ENCODE measurements at regions of chr1 and their contacts with region 1.

Region 1: DNA sequence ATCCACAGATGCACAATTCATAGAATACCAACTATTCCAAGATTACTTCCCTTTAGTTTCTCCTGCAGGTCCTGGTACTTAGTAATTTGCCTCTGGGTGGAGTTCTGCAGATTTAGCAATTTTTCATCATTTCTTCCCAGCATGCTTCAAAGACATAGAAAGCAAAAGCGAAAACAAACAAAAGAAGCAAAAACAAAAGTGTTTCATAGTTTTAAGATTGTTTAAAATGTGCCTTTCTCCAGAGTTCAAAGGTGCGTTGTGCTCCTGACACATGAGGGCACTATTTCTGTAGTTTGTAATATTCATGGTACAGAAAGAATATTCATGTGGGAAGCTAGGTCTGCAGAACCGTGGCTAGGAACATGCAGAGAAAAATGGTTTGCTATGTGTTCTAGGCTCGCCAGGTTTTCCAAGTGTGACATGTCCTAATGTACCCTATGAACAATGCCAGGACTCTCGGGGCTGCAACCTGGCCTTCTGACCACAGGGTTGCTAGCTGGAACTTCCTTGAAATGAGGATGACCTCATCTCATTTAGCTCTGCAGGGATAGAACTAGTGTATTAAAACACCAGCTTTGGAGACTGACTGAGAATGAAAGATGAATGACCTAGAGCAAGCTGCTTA is 30.0 kb upstream of the RCSD1 start:
- DNase-seq: peak; percentile 56 to 74 (median 65)
- H3K4me3 ChIP-seq: no peak overlapping the region
- H3K4me3 Mint-ChIP-seq: peak overlapping the region in 7 of 8 donors; percentile 23 to 82 (median 57)
- H3K27ac ChIP-seq: no peak overlapping the region
- H3K27ac Mint-ChIP-seq: peak overlapping the region; percentile 25 to 62 (median 40)
- H3K4me1 ChIP-seq: peaks cover 39% of the 10 kb centered on the region
- H3K4me1 Mint-ChIP-seq: peaks cover 31 to 47% (median 41%) of the 10 kb centered on the region in 4 donors
- H3K27me3 ChIP-seq: no peaks in the 10 kb centered on the region
- H3K27me3 Mint-ChIP-seq: no peaks in the 10 kb centered on the region

Region 2: DNA sequence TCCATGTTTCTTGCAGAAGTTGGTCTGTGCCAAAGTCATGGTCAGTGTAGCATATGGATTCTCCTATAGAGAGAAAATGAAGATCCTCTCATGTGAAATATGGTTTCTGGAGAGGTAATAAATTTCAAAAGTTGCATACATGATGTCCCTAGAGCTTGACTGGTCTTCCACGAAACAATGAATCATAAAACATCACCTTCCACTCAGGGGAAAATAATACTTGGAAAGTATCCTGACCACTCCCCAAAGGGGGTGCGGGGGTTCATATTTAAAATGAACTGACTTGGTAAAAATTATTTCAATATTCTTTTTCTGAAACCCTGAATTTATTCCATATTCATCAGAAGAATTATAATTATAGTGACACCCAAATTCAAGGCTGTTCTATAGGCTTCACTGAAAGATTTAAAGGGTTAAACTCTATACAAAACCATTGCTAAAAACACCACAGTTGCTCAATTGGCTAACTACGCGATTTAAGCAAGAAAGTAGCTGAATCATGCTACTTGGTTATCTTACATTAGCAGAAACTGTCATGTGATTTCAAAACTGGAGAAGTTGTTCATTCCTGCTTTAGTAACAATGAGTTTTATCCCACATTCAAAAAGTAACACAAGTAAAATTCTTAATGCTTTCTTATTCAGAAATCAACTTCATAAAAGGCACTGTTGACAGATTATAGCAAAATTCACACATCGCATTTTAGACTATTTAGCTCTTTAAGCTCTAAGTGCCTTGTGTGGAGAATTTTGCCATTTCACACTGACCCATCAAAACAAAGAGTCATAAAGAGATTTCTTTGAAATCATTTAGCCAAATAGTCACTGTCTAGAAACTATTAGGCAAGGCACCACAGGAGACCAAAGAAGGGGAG is 51.8 kb before region 1 on chr1:
- CTCF ChIA-PET with region 1: no interaction called
- POLR2A ChIA-PET with region 1: no interaction called
- intact Hi-C with region 1: no loop called
- DNase-seq: no peak
- H3K4me3 ChIP-seq: no peak overlapping the region
- H3K4me3 Mint-ChIP-seq: no peak overlapping the region
- H3K27ac ChIP-seq: no peak overlapping the region
- H3K27ac Mint-ChIP-seq: no peak overlapping the region
- H3K4me1 ChIP-seq: peaks cover 19% of the 10 kb centered on the region
- H3K4me1 Mint-ChIP-seq: peaks cover 18 to 40% (median 27%) of the 10 kb centered on the region in 4 donors
- H3K27me3 ChIP-seq: no peaks in the 10 kb centered on the region
- H3K27me3 Mint-ChIP-seq: no peaks in the 10 kb centered on the region

Region 3: GRCh38 chr1:167563579-167564246 is 36.4 kb before region 1 on chr1:
- CTCF ChIA-PET with region 1: interaction called, 10 read pairs
- POLR2A ChIA-PET with region 1: no interaction called
- intact Hi-C with region 1: no loop called
- DNase-seq: no peak
- H3K4me3 ChIP-seq: no peak overlapping the region
- H3K4me3 Mint-ChIP-seq: no peak overlapping the region
- H3K27ac ChIP-seq: no peak overlapping the region
- H3K27ac Mint-ChIP-seq: peak overlapping the region in 1 of 7 donors; percentile 42
- H3K4me1 ChIP-seq: no peaks in the 10 kb centered on the region
- H3K4me1 Mint-ChIP-seq: peaks cover 0 to 1% (median 0%) of the 10 kb centered on the region in 4 donors
- H3K27me3 ChIP-seq: no peaks in the 10 kb centered on the region
- H3K27me3 Mint-ChIP-seq: peaks cover 0 to 1% of the 10 kb centered on the region in 2 donors

Region 4: GRCh38 chr1:167582064-167582463 is 18.0 kb before region 1 on chr1:
- CTCF ChIA-PET with region 1: no interaction called
- POLR2A ChIA-PET with region 1: no interaction called
- intact Hi-C with region 1: no loop called
- DNase-seq: no peak
- H3K4me3 ChIP-seq: no peak overlapping the region
- H3K4me3 Mint-ChIP-seq: no peak overlapping the region
- H3K27ac ChIP-seq: no peak overlapping the region
- H3K27ac Mint-ChIP-seq: no peak overlapping the region
- H3K4me1 ChIP-seq: no peaks in the 10 kb centered on the region
- H3K4me1 Mint-ChIP-seq: no peaks in the 10 kb centered on the region
- H3K27me3 ChIP-seq: no peaks in the 10 kb centered on the region
- H3K27me3 Mint-ChIP-seq: peaks cover 0 to 6% of the 10 kb centered on the region in 2 donors

Region 5: DNA sequence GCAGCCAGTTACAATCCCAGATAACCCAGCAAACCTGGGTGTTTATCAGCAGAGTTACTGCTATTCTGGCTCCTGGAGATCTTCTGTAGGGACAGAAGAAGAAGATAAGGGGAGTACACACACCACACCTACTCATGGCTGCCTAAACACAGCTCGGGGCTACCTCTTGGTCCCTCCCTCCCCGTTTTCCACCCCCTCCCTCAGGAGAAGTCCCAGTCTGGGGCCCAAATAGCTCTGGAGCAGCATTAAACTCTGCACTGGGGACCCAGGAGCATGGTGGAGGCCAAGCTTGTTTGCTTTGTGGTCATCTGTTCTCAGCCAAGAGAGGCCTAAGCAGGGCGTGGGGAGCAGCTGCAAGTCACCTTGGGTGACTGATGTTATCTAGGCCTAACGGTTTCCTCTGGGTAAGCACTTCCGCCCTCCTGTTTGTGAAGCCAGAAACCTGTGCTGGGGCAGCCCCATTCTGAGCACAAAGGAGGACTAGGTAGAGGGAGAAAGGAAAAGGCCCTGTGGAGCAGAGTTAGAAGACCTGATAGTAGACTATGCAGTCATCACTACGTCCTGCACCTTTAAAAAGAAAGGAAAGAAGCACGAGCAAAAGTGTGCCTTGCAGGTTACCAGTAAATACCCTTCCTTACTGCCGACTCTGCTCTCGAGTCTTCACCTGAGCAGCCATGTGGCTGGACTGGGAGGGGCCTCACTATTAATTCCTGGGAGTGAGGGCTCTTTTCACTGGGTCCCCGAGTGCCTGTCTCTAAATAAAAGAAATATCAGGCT is 28.0 kb after region 1 on chr1:
- CTCF ChIA-PET with region 1: interaction called, 406 read pairs
- POLR2A ChIA-PET with region 1: interaction called, 255 read pairs
- intact Hi-C with region 1: loop called (anchors 2 kb)
- DNase-seq: peak; percentile 78 to 95 (median 81)
- H3K4me3 ChIP-seq: peak overlapping the region; percentile 74 to 82
- H3K4me3 Mint-ChIP-seq: peak overlapping the region; percentile 90 to 99 (median 94)
- H3K27ac ChIP-seq: peak overlapping the region; percentile 90
- H3K27ac Mint-ChIP-seq: peak overlapping the region; percentile 94 to 99 (median 96)
- H3K4me1 ChIP-seq: peaks cover 56% of the 10 kb centered on the region
- H3K4me1 Mint-ChIP-seq: peaks cover 46 to 81% (median 54%) of the 10 kb centered on the region in 4 donors
- H3K27me3 ChIP-seq: no peaks in the 10 kb centered on the region
- H3K27me3 Mint-ChIP-seq: no peaks in the 10 kb centered on the region

Region 6: GRCh38 chr1:167650269-167651160 is 50.4 kb after region 1 on chr1:
- CTCF ChIA-PET with region 1: interaction called, 26 read pairs
- POLR2A ChIA-PET with region 1: interaction called, 3 read pairs
- intact Hi-C with region 1: no loop called
- DNase-seq: no peak
- H3K4me3 ChIP-seq: peak overlapping the region in 1 of 2 donors; percentile 12
- H3K4me3 Mint-ChIP-seq: peak overlapping the region in 7 of 8 donors; percentile 63 to 87 (median 75)
- H3K27ac ChIP-seq: peak overlapping the region; percentile 55
- H3K27ac Mint-ChIP-seq: peak overlapping the region; percentile 87 to 95 (median 92)
- H3K4me1 ChIP-seq: peaks cover 98% of the 10 kb centered on the region
- H3K4me1 Mint-ChIP-seq: peaks cover 71 to 92% (median 84%) of the 10 kb centered on the region in 4 donors
- H3K27me3 ChIP-seq: no peaks in the 10 kb centered on the region
- H3K27me3 Mint-ChIP-seq: no peaks in the 10 kb centered on the region

Region 7: GRCh38 chr1:167676205-167676915 is 76.3 kb after region 1 on chr1:
- CTCF ChIA-PET with region 1: interaction called, 37 read pairs
- POLR2A ChIA-PET with region 1: interaction called, 10 read pairs
- intact Hi-C with region 1: no loop called
- DNase-seq: no peak
- H3K4me3 ChIP-seq: no peak overlapping the region
- H3K4me3 Mint-ChIP-seq: no peak overlapping the region
- H3K27ac ChIP-seq: peak overlapping the region; percentile 17
- H3K27ac Mint-ChIP-seq: peak overlapping the region in 6 of 7 donors; percentile 70 to 85 (median 78)
- H3K4me1 ChIP-seq: peaks cover 71% of the 10 kb centered on the region
- H3K4me1 Mint-ChIP-seq: peaks cover 27 to 50% (median 41%) of the 10 kb centered on the region in 4 donors
- H3K27me3 ChIP-seq: no peaks in the 10 kb centered on the region
- H3K27me3 Mint-ChIP-seq: no peaks in the 10 kb centered on the region

Region 8: GRCh38 chr1:167715157-167715999 is 115.3 kb after region 1 on chr1:
- CTCF ChIA-PET with region 1: interaction called, 35 read pairs
- POLR2A ChIA-PET with region 1: interaction called, 11 read pairs
- intact Hi-C with region 1: no loop called
- DNase-seq: peak; percentile 87 to 91 (median 88)
- H3K4me3 ChIP-seq: peak overlapping the region; percentile 80 to 87
- H3K4me3 Mint-ChIP-seq: peak overlapping the region; percentile 84 to 98 (median 92)
- H3K27ac ChIP-seq: peak overlapping the region; percentile 39
- H3K27ac Mint-ChIP-seq: peak overlapping the region; percentile 90 to 99 (median 94)
- H3K4me1 ChIP-seq: peaks cover 31% of the 10 kb centered on the region
- H3K4me1 Mint-ChIP-seq: peaks cover 19 to 49% (median 38%) of the 10 kb centered on the region in 4 donors
- H3K27me3 ChIP-seq: no peaks in the 10 kb centered on the region
- H3K27me3 Mint-ChIP-seq: peaks cover 4 to 12% of the 10 kb centered on the region in 2 donors

Region 9: DNA sequence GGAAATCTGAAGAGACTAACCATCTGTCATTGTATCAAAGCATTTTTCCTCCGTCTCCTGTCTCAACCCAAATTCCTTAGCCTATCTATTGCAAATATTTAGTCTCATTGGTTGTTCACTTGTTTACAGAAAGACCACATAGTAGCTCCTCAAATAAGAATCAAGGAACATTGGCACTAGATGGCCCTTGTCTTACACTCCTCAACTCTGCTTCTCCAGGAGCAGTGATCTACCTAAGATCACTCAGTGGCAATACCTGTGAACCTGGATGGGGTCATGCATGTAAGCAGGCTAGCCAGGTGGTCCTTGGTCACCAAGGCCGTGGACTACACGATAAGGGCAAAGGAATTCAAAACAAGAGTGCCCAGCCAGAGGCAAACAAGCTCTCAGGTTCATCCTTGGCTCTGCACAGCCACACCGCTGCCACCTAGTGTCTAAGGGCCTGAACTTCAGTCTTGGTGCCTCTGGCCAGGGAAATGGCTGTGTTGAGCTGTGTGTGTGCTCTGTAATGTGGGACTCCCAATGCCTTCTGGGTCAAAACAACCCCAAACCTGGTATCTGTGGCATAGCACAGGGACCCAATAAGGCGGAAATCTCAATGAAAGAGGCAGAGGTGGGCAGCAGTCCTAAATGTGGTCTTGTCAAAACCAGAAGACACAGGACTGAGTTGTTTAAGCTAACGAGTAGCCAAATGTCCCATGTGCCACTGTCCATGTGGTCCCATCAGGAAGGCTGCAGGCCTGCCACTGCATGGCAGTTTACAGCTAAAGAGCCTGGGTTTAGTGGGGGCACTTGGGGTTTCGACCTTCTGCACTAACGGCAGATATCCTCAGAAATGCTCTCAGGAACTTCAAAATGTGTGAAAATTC is 482.2 kb after region 1 on chr1:
- CTCF ChIA-PET with region 1: no interaction called
- POLR2A ChIA-PET with region 1: no interaction called
- intact Hi-C with region 1: loop called (anchors 5 kb)
- DNase-seq: peak in 4 of 5 donors; percentile 40 to 55 (median 48)
- H3K4me3 ChIP-seq: no peak overlapping the region
- H3K4me3 Mint-ChIP-seq: no peak overlapping the region
- H3K27ac ChIP-seq: no peak overlapping the region
- H3K27ac Mint-ChIP-seq: peak overlapping the region in 2 of 7 donors; percentile 30
- H3K4me1 ChIP-seq: peaks cover 4% of the 10 kb centered on the region
- H3K4me1 Mint-ChIP-seq: peaks cover 0 to 6% (median 3%) of the 10 kb centered on the region in 4 donors
- H3K27me3 ChIP-seq: no peaks in the 10 kb centered on the region
- H3K27me3 Mint-ChIP-seq: no peaks in the 10 kb centered on the region